Mucosa of descending colon (tissue), 3 donors: ENCODE measurements at regions of chr1 and their contacts with region 1.

Region 1: DNA sequence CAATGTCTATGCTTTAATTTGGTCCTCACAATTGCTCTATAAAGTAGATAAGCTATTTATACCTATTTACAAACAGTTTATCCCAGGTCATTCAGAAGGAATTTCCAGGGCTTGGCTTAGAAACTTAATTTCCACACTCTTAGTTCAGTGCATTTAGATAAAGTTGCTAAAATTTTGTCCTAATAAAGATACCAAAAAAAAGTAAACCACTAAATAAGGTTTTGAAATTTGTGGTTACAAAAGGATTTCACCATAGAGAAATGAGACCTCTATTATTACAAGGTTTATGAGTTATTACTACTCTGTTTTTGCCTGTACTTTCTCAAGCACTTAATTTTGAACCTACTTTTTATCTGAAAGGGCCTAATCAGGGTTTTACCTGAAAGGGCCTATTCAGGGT is 22.5 kb downstream of the PTPN22 start:
- DNase-seq: no peak
- ATAC-seq: no peak
- H3K4me3 ChIP-seq: no peak overlapping the region
- H3K4me1 ChIP-seq: no peaks in the 10 kb centered on the region
- CTCF ChIP-seq: no peak

Region 2: GRCh38 chr1:113768901-113769600 is 80.0 kb before region 1 on chr1:
- intact Hi-C with region 1: no loop called
- DNase-seq: no peak
- ATAC-seq: no peak
- H3K4me3 ChIP-seq: no peak overlapping the region
- H3K4me1 ChIP-seq: no peaks in the 10 kb centered on the region
- CTCF ChIP-seq: no peak

Region 3: GRCh38 chr1:113898241-113898814 is 49.3 kb after region 1 on chr1:
- intact Hi-C with region 1: loop called in 1 of 2 experiments (anchors 10 kb)
- DNase-seq: no peak
- ATAC-seq: no peak
- H3K4me3 ChIP-seq: no peak overlapping the region
- H3K4me1 ChIP-seq: peaks cover 30% of the 10 kb centered on the region
- CTCF ChIP-seq: no peak

Region 4: DNA sequence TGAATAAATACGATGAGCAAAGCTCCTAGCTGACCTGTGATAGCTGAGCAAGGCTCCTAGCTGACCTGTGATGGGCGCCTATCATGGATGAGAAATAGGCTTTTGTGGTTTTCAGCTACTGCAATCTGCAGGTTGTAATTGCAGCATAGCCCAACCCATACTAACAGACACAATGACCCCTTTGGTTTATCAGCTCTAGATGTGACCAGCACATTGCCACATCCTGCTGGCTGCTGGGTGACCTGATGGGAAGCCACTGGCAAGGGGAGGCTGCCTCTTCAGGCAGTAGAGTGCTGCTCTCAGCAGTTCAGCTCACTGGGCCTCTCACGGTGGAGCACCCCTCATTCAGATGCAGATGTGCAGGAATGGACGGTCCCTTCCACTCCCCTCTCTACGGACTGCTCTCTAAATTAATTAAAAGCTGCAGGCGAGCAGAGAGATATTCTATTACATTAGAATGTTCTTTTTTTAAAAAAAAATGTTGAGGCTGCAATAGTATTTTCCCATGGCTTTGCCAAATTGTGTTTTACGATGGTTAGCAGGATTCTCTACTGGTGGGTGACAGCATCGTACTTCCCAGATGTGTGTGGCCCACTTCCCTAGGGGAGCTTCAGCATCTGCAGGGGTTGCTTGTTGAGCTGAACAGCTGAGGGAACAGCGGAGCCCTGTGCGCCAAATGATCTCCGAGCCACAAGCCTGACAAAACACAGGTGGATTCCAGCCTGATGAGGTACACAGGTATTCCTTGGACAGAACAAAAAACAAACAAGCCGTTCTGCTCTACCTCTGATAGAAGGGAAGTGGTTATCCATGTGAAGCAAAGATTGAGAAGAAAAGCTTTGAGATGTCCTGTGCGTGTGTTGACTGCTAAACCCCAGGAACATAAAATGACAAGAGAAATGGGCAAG is 239.6 kb after region 1 on chr1:
- intact Hi-C with region 1: no loop called
- DNase-seq: no peak
- ATAC-seq: no peak
- H3K4me3 ChIP-seq: no peak overlapping the region
- H3K4me1 ChIP-seq: no peaks in the 10 kb centered on the region
- CTCF ChIP-seq: no peak